PC-3 (cell line): ENCODE measurements at regions of chr20 and their contacts with region 1.

Region 1: GRCh38 chr20:45948742-45949541 is 14.5 kb downstream of the PCIF1 start:
- DNase-seq: no peak
- ATAC-seq: 0 out of 2 replicates have a peak, but pooled peaks have one; percentile 1
- H3K4me3 ChIP-seq: no peak overlapping the region
- H3K27ac ChIP-seq: no peak overlapping the region
- H3K4me1 ChIP-seq: no peaks in the 10 kb centered on the region
- H3K27me3 ChIP-seq: no peaks in the 10 kb centered on the region
- CTCF ChIP-seq: no peak

Region 2: DNA sequence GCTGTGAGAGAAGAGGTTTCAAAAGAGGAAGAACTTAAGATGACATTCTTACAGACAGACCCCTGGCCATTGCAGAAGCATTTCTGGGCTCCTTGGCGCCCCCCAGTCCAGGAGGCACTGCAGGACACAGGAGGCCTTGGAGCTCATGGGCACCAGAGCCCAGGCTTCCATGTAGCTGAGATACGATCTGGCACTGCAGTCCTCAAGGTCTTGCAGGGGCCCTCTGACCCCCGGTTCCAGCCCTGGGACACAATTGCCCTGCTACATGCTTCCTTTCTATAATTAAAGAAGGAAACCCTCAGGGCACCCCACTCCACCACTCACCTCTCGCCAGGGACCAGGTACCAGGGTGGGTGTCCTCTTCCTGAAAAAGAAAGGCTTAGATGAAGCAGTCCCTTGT is 190.9 kb before region 1 on chr20:
- CTCF ChIA-PET with region 1: no interaction called
- POLR2A ChIA-PET with region 1: no interaction called
- intact Hi-C with region 1: no loop called
- DNase-seq: no peak
- ATAC-seq: no peak
- H3K4me3 ChIP-seq: no peak overlapping the region
- H3K27ac ChIP-seq: no peak overlapping the region
- H3K4me1 ChIP-seq: no peaks in the 10 kb centered on the region
- H3K27me3 ChIP-seq: no peaks in the 10 kb centered on the region
- CTCF ChIP-seq: no peak

Region 3: DNA sequence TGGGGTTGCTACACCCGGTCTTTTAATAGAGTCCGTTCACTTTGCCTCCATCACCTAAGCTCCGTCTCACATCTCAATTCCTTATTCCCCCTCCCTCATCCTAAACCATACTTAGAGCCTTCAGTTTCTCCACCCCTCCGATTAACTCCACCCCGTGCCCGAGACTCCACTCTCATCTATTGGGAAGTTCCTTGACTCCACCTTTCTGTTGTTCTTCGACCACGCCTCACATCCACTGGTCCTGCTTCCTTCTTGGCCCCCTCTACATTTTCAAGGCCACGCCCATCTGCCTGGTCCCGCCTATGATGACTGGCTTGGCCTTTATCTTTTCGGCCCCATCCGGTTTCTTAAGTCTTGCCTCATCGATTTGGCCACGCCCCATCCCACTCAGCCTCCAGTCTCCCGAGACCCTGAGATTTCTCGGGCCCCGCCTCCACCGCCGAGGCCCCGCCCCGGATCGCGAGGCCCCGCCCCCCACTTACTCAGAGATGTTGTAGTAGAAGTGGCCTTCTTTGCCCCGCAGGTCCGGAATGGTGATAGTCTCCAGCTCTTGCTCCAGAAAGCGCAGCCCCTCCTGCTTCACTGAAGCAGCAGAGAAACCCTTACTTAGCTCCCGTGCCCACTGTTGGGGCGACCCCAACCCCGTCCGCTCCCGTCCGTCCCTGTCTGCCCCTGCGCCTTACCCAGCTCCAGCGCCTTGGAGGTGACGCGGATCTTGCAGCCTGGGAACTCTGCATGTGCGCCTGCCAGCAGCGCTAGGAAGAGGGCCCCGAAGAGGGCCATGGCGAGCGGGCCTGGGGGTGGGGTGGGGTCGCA is 38.1 kb before region 1 on chr20:
- CTCF ChIA-PET with region 1: no interaction called
- POLR2A ChIA-PET with region 1: interaction called, 20 read pairs
- intact Hi-C with region 1: no loop called
- DNase-seq: peak; percentile 99
- ATAC-seq: peak; percentile 76
- H3K4me3 ChIP-seq: peak overlapping the region; percentile 65
- H3K27ac ChIP-seq: peak overlapping the region; percentile 35
- H3K4me1 ChIP-seq: peaks cover 15% of the 10 kb centered on the region
- H3K27me3 ChIP-seq: no peaks in the 10 kb centered on the region
- CTCF ChIP-seq: no peak